ENCODE measurements at regions of chr1 and their contacts with region 1.

Region 1: GRCh38 chr1:12407050-12407961 is 177.5 kb downstream of the VPS13D start:
- DNase-seq: no peak
- H3K4me3 ChIP-seq: no peak overlapping the region
- H3K27ac ChIP-seq: no peak overlapping the region
- H3K4me1 ChIP-seq: peaks cover 3 to 43% (median 32%) of the 10 kb centered on the region in 6 donors
- H3K27me3 ChIP-seq: no peaks in the 10 kb centered on the region
- CTCF ChIP-seq: peak in 5 of 11 experiments; percentile 5 to 50 (median 24)
- POLR2A ChIP-seq: no peak

Region 2: GRCh38 chr1:12539705-12540579 is 132.6 kb after region 1 on chr1:
- intact Hi-C with region 1: no loop called
- DNase-seq: no peak
- H3K4me3 ChIP-seq: no peak overlapping the region
- H3K27ac ChIP-seq: peak overlapping the region in 3 of 8 donors; percentile 11 to 24 (median 23)
- H3K4me1 ChIP-seq: peaks cover 0 to 26% (median 9%) of the 10 kb centered on the region in 6 donors
- H3K27me3 ChIP-seq: peaks cover 0 to 7% (median 0%) of the 10 kb centered on the region in 7 donors
- CTCF ChIP-seq: no peak
- POLR2A ChIP-seq: no peak

Region 3: GRCh38 chr1:12619792-12620487 is 212.6 kb after region 1 on chr1:
- intact Hi-C with region 1: loop called (anchors 10 kb)
- DNase-seq: peak; percentile 93
- H3K4me3 ChIP-seq: peak overlapping the region in 7 of 8 donors; percentile 49 to 87 (median 71)
- H3K27ac ChIP-seq: peak overlapping the region; percentile 59 to 90 (median 84)
- H3K4me1 ChIP-seq: peaks cover 27 to 75% (median 59%) of the 10 kb centered on the region in 6 donors
- H3K27me3 ChIP-seq: peaks cover 0 to 45% (median 7%) of the 10 kb centered on the region in 7 donors
- CTCF ChIP-seq: peak; percentile 93 to 97 (median 96)
- POLR2A ChIP-seq: no peak